ENCODE measurements at regions of chr3 and their contacts with region 1.

Region 1: DNA sequence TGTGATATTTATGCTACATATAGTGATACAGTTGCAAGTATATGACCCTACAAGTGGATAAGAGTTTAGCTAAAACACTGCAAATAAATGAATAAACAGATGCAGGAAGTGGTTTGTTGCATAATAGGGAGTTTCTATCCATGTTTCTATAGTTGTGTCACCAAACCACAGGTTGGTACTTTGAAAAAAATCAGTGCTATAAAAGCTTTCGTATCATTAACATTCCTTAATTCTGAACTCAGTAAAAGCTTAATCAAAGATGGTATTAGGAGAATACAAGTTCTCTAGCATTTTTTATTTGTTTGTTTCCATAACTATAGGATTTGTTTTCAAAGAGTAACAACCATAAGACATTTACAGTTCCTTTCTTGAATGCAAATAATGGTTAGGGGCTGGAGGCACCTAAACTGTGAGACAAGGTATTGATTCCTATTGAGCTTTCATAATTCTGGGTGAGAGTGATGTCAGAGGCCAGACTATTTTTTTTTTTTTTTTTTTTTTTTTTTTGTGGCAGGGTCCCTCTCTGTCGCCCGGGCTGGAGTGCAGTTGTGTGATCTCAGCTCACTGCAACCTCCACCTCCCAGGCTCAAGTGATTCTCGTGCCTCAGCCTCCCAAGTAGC is 29.6 kb downstream of the CPOX start:
- DNase-seq: peak in 18 of 35 experiments; percentile 10 to 80 (median 21)
- ATAC-seq: peak; percentile 51 to 74 (median 54)
- H3K4me3 ChIP-seq: no peak overlapping the region
- H3K4me3 Mint-ChIP-seq: peak overlapping the region; percentile 63 to 66 (median 66)
- H3K27ac ChIP-seq: peak overlapping the region; percentile 94
- H3K27ac Mint-ChIP-seq: peak overlapping the region; percentile 95 to 98
- H3K4me1 ChIP-seq: peaks cover 15 to 39% of the 10 kb centered on the region in 2 experiments
- H3K4me1 Mint-ChIP-seq: peaks cover 59 to 82% (median 75%) of the 10 kb centered on the region in 3 donors
- H3K27me3 ChIP-seq: no peaks in the 10 kb centered on the region
- H3K27me3 Mint-ChIP-seq: no peaks in the 10 kb centered on the region

Region 2: GRCh38 chr3:97848779-97849178 is 715.0 kb before region 1 on chr3:
- CTCF ChIA-PET with region 1: interaction called in 1 of 2 experiments, 11 read pairs
- POLR2A ChIA-PET with region 1: no interaction called
- DNase-seq: no peak
- ATAC-seq: no peak
- H3K4me3 ChIP-seq: no peak overlapping the region
- H3K4me3 Mint-ChIP-seq: no peak overlapping the region
- H3K27ac ChIP-seq: no peak overlapping the region
- H3K27ac Mint-ChIP-seq: no peak overlapping the region
- H3K4me1 ChIP-seq: no peaks in the 10 kb centered on the region
- H3K4me1 Mint-ChIP-seq: no peaks in the 10 kb centered on the region
- H3K27me3 ChIP-seq: no peaks in the 10 kb centered on the region
- H3K27me3 Mint-ChIP-seq: no peaks in the 10 kb centered on the region

Region 3: DNA sequence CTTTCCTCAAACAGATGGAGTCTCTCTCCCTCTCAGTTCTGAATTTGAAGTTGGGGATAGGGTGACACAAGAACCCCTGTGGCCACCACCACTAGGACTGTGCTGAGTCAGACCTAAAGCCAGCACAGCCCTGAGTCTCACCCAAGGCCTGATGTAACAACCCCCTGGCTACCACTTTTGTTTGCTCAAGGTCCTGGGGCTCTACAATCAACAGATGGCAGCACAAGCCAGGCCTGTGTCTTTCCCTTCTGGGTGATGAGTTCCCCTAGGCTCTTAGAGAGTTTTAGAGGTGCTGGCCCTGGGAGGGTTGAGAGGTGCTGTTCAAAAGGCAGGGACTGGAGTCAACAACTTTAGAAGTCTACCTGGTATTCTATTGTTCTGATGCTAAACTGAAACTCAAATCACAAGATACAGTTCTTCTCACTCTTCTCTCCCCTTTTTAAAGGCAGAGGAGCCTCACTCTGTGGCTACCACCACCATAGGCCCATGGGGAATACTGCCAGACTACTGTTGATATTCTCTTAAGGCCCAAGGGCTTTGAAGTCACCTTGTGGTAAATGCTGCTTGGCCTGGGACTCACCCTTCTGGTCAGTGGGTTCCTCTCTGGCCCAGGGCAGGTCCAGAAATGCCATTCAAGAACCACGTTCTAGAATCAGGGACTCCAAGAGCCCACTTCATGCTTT is 203.6 kb before region 1 on chr3:
- CTCF ChIA-PET with region 1: no interaction called
- POLR2A ChIA-PET with region 1: interaction called in 1 of 2 experiments, 13 read pairs
- DNase-seq: peak in 1 of 35 experiments; percentile 16
- ATAC-seq: peak in 2 of 4 experiments; percentile 32 to 33
- H3K4me3 ChIP-seq: no peak overlapping the region
- H3K4me3 Mint-ChIP-seq: no peak overlapping the region
- H3K27ac ChIP-seq: no peak overlapping the region
- H3K27ac Mint-ChIP-seq: peak overlapping the region in 1 of 2 donors; percentile 68
- H3K4me1 ChIP-seq: no peaks in the 10 kb centered on the region
- H3K4me1 Mint-ChIP-seq: peaks cover 0 to 7% (median 0%) of the 10 kb centered on the region in 3 donors
- H3K27me3 ChIP-seq: peaks cover 0 to 3% of the 10 kb centered on the region in 2 experiments
- H3K27me3 Mint-ChIP-seq: no peaks in the 10 kb centered on the region

Region 4: DNA sequence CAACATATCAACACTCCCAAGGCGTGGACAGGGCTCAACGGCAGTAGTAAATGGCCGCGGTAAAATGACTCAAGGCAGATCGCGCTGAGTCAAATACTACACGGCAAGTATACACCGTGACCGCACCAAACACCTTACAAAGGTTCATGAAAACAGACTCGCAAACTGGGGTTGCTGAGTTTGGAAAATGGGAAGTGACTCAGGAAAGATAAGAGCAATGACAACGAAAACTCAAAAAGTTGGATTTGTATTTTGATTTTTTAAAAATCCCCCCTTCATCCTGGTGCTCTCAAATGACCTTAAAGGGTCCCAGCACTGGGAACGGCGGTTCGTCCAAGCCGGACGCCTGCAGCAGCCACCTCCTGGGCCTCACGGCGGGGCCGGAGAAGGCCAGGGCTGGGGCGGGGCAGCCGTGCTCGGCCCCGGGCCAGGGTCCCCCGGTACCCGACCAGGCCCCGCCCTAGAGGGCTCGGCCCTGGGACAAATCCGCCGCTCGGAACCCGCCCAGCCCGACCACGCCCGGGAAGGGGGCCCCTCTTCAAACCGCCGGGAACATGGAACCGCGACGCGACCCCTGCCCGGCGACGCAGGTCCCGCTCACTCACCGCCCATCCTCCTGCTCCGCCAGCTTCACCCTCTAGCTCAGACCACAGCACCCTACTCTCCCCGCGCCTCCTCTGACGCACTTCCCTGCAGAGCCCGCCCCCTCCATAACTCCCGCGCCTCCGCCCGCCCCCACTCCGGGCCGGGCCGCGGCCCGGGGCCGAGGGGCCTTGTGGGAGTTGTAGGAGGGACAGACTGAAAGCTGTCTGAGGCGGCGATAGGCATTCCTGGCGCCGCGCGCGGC is 41.3 kb before region 1 on chr3 and contains the start of gene CLDND1:
- CTCF ChIA-PET with region 1: interaction called in 1 of 2 experiments, 9 read pairs
- POLR2A ChIA-PET with region 1: interaction called, 5 to 49 read pairs
- DNase-seq: peak; percentile 92 to 97 (median 95)
- ATAC-seq: peak; percentile 95 to 99 (median 97)
- H3K4me3 ChIP-seq: peak within 1 kb of the TSS; percentile 71 to 92
- H3K4me3 Mint-ChIP-seq: peak within 1 kb of the TSS; percentile 77 to 95 (median 94)
- H3K27ac ChIP-seq: peak within 1 kb of the TSS; percentile 79
- H3K27ac Mint-ChIP-seq: peak within 1 kb of the TSS; percentile 95 to 97
- H3K4me1 ChIP-seq: peaks cover 11 to 23% of the 10 kb centered on the region in 2 experiments
- H3K4me1 Mint-ChIP-seq: peaks cover 50 to 60% (median 51%) of the 10 kb centered on the region in 3 donors
- H3K27me3 ChIP-seq: no peaks in the 10 kb centered on the region
- H3K27me3 Mint-ChIP-seq: no peaks in the 10 kb centered on the region
- total RNA-seq, gene CLDND1: 133 to 404 (median 264) TPM

Region 5: GRCh38 chr3:98901392-98902350 is 337.9 kb after region 1 on chr3 and contains the start of gene DCBLD2:
- CTCF ChIA-PET with region 1: interaction called in 1 of 2 experiments, 4 read pairs
- POLR2A ChIA-PET with region 1: interaction called in 1 of 2 experiments, 11 read pairs
- DNase-seq: peak; percentile 79 to 94 (median 88)
- ATAC-seq: peak; percentile 97 to 98 (median 98)
- H3K4me3 ChIP-seq: peak within 1 kb of the TSS; percentile 76 to 77
- H3K4me3 Mint-ChIP-seq: peak within 1 kb of the TSS; percentile 88 to 91 (median 89)
- H3K27ac ChIP-seq: peak within 1 kb of the TSS; percentile 41
- H3K27ac Mint-ChIP-seq: peak within 1 kb of the TSS; percentile 47 to 84
- H3K4me1 ChIP-seq: peaks cover 9 to 16% of the 10 kb centered on the region in 2 experiments
- H3K4me1 Mint-ChIP-seq: peaks cover 10 to 19% (median 18%) of the 10 kb centered on the region in 3 donors
- H3K27me3 ChIP-seq: peaks cover 0 to 10% of the 10 kb centered on the region in 2 experiments
- H3K27me3 Mint-ChIP-seq: peaks cover 5 to 8% of the 10 kb centered on the region in 2 donors
- total RNA-seq, gene DCBLD2: 2.3 to 3.0 (median 2.8) TPM